ENCODE measurements at regions of chr14 and their contacts with region 1.

Region 1: GRCh38 chr14:54691525-54692283 is 124.8 kb downstream of the SAMD4A start:
- DNase-seq: peak; percentile 79 to 90
- H3K4me3 ChIP-seq: no peak overlapping the region
- H3K27ac ChIP-seq: peak overlapping the region in 1 of 5 donors; percentile 60
- H3K4me1 ChIP-seq: peaks cover 0 to 26% (median 16%) of the 10 kb centered on the region in 4 donors
- H3K27me3 ChIP-seq: no peaks in the 10 kb centered on the region
- CTCF ChIP-seq: peak in 5 of 7 experiments; percentile 44 to 80 (median 78)
- EP300 ChIP-seq: no peak
- POLR2A ChIP-seq: no peak

Region 2: GRCh38 chr14:54411371-54411770 is 280.3 kb before region 1 on chr14:
- intact Hi-C with region 1: no loop called
- DNase-seq: no peak
- H3K4me3 ChIP-seq: no peak overlapping the region
- H3K27ac ChIP-seq: no peak overlapping the region
- H3K4me1 ChIP-seq: no peaks in the 10 kb centered on the region
- H3K27me3 ChIP-seq: no peaks in the 10 kb centered on the region
- CTCF ChIP-seq: no peak
- EP300 ChIP-seq: no peak
- POLR2A ChIP-seq: no peak

Region 3: GRCh38 chr14:54549862-54550261 is 141.8 kb before region 1 on chr14:
- intact Hi-C with region 1: no loop called
- DNase-seq: peak in 1 of 2 donors; percentile 9
- H3K4me3 ChIP-seq: no peak overlapping the region
- H3K27ac ChIP-seq: no peak overlapping the region
- H3K4me1 ChIP-seq: no peaks in the 10 kb centered on the region
- H3K27me3 ChIP-seq: no peaks in the 10 kb centered on the region
- CTCF ChIP-seq: no peak
- EP300 ChIP-seq: no peak
- POLR2A ChIP-seq: no peak

Region 4: DNA sequence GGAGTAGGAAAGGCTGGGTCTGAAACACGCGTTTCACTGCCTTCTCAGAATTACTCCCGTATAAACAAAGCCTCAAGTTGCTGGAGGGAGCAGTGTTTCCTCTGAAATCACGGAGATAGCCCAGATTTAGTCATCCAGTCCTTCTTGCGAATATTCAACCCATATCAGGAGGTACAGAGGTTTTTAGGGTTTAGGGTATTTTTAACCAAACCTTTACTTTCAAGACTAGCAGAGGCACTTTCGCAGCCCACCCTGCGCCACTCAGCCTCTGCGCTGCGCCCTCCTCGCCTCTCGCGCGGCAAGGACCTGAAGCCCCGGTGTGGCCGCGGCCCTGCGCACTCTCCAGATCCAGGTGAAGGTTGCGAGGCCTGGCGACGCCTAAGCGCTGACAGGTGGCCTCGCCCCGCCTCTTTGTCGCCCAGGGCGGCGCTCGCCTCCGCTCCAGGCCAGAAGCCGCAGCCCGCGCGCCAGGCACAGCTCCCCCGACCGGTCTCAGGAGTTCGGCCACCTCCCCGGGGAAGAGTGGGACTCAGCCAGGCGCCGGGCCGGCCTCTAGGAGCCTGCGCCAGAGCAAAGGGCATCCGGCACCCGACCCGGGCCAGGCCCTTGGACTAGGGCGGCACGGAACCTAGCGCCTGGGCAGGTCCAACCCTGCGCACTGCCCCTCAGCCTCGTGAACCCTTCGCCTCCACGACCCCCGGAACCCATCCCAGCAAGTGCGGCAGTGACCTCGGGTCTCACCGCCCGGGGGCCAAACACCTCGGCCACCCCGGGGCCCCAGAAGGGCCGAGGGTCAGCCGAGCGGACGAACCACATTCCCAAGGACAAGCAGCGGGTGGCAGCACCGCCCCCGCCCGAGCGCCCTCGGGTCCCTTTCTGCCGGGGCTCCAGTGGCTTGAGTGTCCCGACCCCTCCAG is 126.6 kb before region 1 on chr14:
- intact Hi-C with region 1: loop called (anchors 5 kb)
- DNase-seq: peak; percentile 91 to 92
- H3K4me3 ChIP-seq: peak overlapping the region; percentile 73 to 81 (median 77)
- H3K27ac ChIP-seq: peak overlapping the region; percentile 96 to 100 (median 99)
- H3K4me1 ChIP-seq: peaks cover 0 to 41% (median 35%) of the 10 kb centered on the region in 4 donors
- H3K27me3 ChIP-seq: peaks cover 0 to 24% (median 0%) of the 10 kb centered on the region in 3 donors
- CTCF ChIP-seq: peak in 5 of 7 experiments; percentile 3 to 23 (median 8)
- EP300 ChIP-seq: no peak
- POLR2A ChIP-seq: peak in 2 of 4 donors; percentile 6 to 76

Region 5: GRCh38 chr14:54742492-54743350 is 51.0 kb after region 1 on chr14:
- intact Hi-C with region 1: no loop called
- DNase-seq: no peak
- H3K4me3 ChIP-seq: no peak overlapping the region
- H3K27ac ChIP-seq: no peak overlapping the region
- H3K4me1 ChIP-seq: peaks cover 0 to 17% (median 8%) of the 10 kb centered on the region in 4 donors
- H3K27me3 ChIP-seq: no peaks in the 10 kb centered on the region
- CTCF ChIP-seq: no peak
- EP300 ChIP-seq: no peak
- POLR2A ChIP-seq: no peak

Measured in stomach (tissue), 19 donors.